ENCODE measurements at regions of chr15 and their contacts with region 1.

Region 1: DNA sequence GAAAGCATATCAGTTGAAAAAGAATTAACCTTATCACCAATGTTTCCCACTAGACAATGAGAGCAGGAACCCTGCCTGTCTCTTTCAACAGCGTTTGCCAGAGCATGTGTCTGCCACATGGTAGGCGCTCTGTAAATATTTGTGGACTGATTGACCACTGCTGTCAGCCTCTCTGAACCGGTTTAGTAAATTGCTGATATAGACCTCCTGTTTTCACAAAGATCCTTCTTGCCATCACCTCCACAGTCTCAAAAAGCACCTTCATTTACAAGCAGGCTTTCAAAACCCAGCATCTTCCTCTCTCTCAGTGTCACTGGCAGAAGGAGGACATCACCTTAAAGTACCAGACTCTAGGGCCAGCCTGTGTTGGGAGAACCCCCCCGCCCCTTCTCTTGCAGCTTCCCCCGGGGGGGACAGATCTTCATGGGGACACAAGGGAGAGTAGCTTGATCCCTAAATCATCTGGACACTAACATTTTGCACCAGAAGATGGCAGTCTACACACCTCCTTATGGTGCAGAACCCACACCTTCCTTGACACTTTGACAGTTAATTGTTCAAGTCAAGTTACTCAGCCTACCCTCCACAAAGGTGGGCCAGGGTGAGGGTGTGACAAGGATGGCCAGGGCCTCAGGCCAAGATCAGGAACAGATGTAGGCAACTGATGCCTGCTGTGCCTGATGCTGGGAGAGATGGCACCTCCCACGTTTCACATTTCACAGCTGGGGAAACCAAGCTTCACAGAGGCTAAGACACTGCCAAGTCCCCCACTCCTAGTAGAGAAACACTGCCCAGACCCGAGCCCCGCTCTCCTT is 37.8 kb upstream of the USP3 start:
- DNase-seq: peak in 30 of 35 experiments; percentile 15 to 88 (median 43)
- ATAC-seq: peak; percentile 85 to 95 (median 94)
- H3K4me3 ChIP-seq: no peak overlapping the region
- H3K4me3 Mint-ChIP-seq: no peak overlapping the region
- H3K27ac ChIP-seq: no peak overlapping the region
- H3K27ac Mint-ChIP-seq: peak overlapping the region; percentile 70 to 77
- H3K4me1 ChIP-seq: peaks cover 9 to 10% of the 10 kb centered on the region in 2 experiments
- H3K4me1 Mint-ChIP-seq: peaks cover 30 to 43% (median 37%) of the 10 kb centered on the region in 3 donors
- H3K27me3 ChIP-seq: no peaks in the 10 kb centered on the region
- H3K27me3 Mint-ChIP-seq: no peaks in the 10 kb centered on the region

Region 2: DNA sequence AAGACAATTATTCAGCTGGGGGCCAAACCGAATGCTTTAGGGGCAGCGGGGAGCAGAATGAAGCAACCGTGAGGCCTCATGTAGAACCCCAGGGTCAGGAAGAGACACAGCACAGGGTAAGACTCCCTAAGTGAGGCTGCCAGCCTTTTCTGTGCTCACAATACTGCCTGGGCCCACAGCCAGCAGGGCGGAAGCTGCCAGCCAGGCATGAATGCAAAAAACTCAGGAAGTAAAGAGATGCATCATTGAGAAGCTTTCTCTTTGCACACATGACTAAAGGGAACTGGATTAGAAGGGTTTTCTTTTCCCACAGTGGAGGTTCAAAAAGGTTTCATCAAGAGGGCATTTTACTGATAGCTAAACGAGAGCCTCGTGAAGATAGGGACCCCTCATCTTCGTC is 118.2 kb before region 1 on chr15:
- CTCF ChIA-PET with region 1: no interaction called
- POLR2A ChIA-PET with region 1: no interaction called
- DNase-seq: no peak
- ATAC-seq: no peak
- H3K4me3 ChIP-seq: no peak overlapping the region
- H3K4me3 Mint-ChIP-seq: no peak overlapping the region
- H3K27ac ChIP-seq: no peak overlapping the region
- H3K27ac Mint-ChIP-seq: no peak overlapping the region
- H3K4me1 ChIP-seq: no peaks in the 10 kb centered on the region
- H3K4me1 Mint-ChIP-seq: no peaks in the 10 kb centered on the region
- H3K27me3 ChIP-seq: peaks cover 0 to 13% of the 10 kb centered on the region in 2 experiments
- H3K27me3 Mint-ChIP-seq: peaks cover 3 to 8% of the 10 kb centered on the region in 2 donors

Region 3: DNA sequence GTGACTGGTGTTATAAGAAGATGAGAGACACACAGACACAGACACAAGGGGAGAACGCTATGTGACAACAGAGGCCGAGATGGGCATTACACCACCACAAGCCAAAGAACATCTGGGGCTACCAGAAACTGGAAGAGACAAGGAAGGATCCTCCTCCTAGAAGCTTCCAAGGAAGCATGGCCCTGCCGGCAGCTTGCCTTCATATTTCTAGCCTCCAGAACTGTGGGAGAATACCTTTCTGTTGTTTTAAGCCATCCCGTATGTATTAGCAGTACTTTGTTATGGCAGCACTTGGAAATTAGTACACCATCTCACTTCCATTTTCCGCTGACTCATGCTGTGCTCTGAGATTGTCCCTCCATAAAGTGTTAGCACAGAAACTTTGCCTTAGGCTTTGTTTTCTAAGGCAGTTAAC is 46.2 kb before region 1 on chr15:
- CTCF ChIA-PET with region 1: no interaction called
- POLR2A ChIA-PET with region 1: no interaction called
- DNase-seq: no peak
- ATAC-seq: no peak
- H3K4me3 ChIP-seq: no peak overlapping the region
- H3K4me3 Mint-ChIP-seq: no peak overlapping the region
- H3K27ac ChIP-seq: no peak overlapping the region
- H3K27ac Mint-ChIP-seq: no peak overlapping the region
- H3K4me1 ChIP-seq: no peaks in the 10 kb centered on the region
- H3K4me1 Mint-ChIP-seq: no peaks in the 10 kb centered on the region
- H3K27me3 ChIP-seq: no peaks in the 10 kb centered on the region
- H3K27me3 Mint-ChIP-seq: no peaks in the 10 kb centered on the region

Region 4: GRCh38 chr15:63497642-63498467 is 31.3 kb after region 1 on chr15:
- CTCF ChIA-PET with region 1: interaction called, 4 to 5 read pairs
- POLR2A ChIA-PET with region 1: interaction called in 1 of 2 experiments, 11 read pairs
- DNase-seq: peak; percentile 59 to 90 (median 79)
- ATAC-seq: peak; percentile 77 to 85 (median 82)
- H3K4me3 ChIP-seq: peak overlapping the region; percentile 27 to 36
- H3K4me3 Mint-ChIP-seq: no peak overlapping the region
- H3K27ac ChIP-seq: peak overlapping the region; percentile 99
- H3K27ac Mint-ChIP-seq: no peak overlapping the region
- H3K4me1 ChIP-seq: peaks cover 69 to 88% of the 10 kb centered on the region in 2 experiments
- H3K4me1 Mint-ChIP-seq: peaks cover 50 to 82% (median 58%) of the 10 kb centered on the region in 3 donors
- H3K27me3 ChIP-seq: no peaks in the 10 kb centered on the region
- H3K27me3 Mint-ChIP-seq: no peaks in the 10 kb centered on the region

Region 5: DNA sequence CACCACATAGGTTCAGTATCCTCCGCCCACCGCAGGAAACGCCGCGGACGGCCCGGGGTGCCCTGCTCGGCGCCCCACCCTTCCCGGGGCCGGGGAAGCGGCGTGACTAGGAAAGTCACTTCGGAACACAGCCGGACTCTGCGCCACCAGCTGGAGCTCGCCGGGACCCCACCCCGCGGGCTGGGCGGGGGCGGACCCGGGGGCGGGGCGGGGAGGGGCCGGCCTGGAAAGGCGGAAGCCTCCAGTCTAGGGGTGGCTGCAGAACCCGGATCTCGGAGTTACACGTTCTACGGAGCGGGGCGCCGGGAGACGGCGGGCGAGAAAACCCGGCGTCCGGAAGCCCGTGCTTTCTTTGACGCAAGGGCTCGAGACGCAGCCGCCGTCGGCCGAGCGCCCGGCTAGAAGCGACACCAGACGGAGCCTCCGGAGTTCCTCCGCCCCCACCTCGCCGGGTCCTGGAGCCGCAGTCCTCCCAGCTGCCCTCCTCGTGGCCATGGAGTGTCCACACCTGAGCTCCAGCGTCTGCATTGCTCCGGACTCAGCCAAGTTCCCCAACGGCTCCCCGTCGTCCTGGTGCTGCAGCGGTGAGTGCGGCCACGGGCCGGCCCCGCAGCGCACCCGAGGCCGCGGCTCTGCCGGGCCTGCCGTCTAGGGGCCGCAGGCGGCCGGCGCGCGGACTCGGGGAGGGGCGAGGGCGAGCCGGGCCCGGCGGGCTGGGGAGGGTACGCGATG is 37.8 kb after region 1 on chr15 and contains the start of gene USP3:
- CTCF ChIA-PET with region 1: interaction called in 1 of 2 experiments, 15 read pairs
- POLR2A ChIA-PET with region 1: no interaction called
- DNase-seq: peak; percentile 84 to 96 (median 91)
- ATAC-seq: peak; percentile 71 to 85 (median 75)
- H3K4me3 ChIP-seq: peak within 1 kb of the TSS; percentile 84 to 99
- H3K4me3 Mint-ChIP-seq: peak within 1 kb of the TSS; percentile 94 to 99 (median 96)
- H3K27ac ChIP-seq: peak within 1 kb of the TSS; percentile 99
- H3K27ac Mint-ChIP-seq: peak within 1 kb of the TSS; percentile 99
- H3K4me1 ChIP-seq: peaks cover 43 to 69% of the 10 kb centered on the region in 2 experiments
- H3K4me1 Mint-ChIP-seq: peaks cover 74 to 75% (median 75%) of the 10 kb centered on the region in 3 donors
- H3K27me3 ChIP-seq: no peaks in the 10 kb centered on the region
- H3K27me3 Mint-ChIP-seq: no peaks in the 10 kb centered on the region
- total RNA-seq, gene USP3: 123 to 265 (median 130) TPM

Region 6: DNA sequence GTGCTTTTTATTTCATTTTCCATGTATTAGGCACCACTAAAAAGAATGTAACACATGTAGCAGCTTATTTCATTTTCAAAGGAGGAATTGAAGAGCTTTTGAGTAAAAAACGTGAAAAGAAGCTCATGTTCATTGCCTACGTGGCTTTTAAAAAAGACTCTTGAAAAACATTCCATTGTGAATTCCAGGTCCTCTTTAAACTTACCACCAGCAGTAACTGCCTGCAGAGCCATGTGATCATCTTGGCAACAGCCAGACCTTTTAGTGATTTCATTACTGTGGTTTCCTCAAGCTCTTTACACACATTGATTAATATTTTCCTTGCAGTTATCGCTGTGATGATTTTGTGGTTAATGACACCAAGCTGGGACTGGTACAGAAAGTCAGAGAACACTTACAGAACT is 86.8 kb after region 1 on chr15:
- CTCF ChIA-PET with region 1: interaction called, 6 to 14 read pairs
- POLR2A ChIA-PET with region 1: no interaction called
- DNase-seq: peak in 1 of 35 experiments; percentile 19
- ATAC-seq: peak in 1 of 4 experiments; percentile 19
- H3K4me3 ChIP-seq: no peak overlapping the region
- H3K4me3 Mint-ChIP-seq: no peak overlapping the region
- H3K27ac ChIP-seq: no peak overlapping the region
- H3K27ac Mint-ChIP-seq: peak overlapping the region; percentile 73 to 75
- H3K4me1 ChIP-seq: peaks cover 3 to 13% of the 10 kb centered on the region in 2 experiments
- H3K4me1 Mint-ChIP-seq: peaks cover 52 to 66% (median 53%) of the 10 kb centered on the region in 3 donors
- H3K27me3 ChIP-seq: no peaks in the 10 kb centered on the region
- H3K27me3 Mint-ChIP-seq: no peaks in the 10 kb centered on the region

Region 7: GRCh38 chr15:63708126-63708772 is 241.7 kb after region 1 on chr15:
- CTCF ChIA-PET with region 1: no interaction called
- POLR2A ChIA-PET with region 1: interaction called in 1 of 2 experiments, 10 read pairs
- DNase-seq: peak in 15 of 35 experiments; percentile 2 to 65 (median 12)
- ATAC-seq: peak; percentile 81 to 96 (median 93)
- H3K4me3 ChIP-seq: no peak overlapping the region
- H3K4me3 Mint-ChIP-seq: peak overlapping the region; percentile 11 to 34 (median 15)
- H3K27ac ChIP-seq: peak overlapping the region; percentile 92
- H3K27ac Mint-ChIP-seq: peak overlapping the region; percentile 91 to 94
- H3K4me1 ChIP-seq: peaks cover 10 to 14% of the 10 kb centered on the region in 2 experiments
- H3K4me1 Mint-ChIP-seq: peaks cover 6 to 27% (median 27%) of the 10 kb centered on the region in 3 donors
- H3K27me3 ChIP-seq: no peaks in the 10 kb centered on the region
- H3K27me3 Mint-ChIP-seq: no peaks in the 10 kb centered on the region

Measured in T-cell (primary cell).